ENCODE measurements at regions of chr6 and their contacts with region 1.

Region 1: GRCh38 chr6:42367353-42368011 is 84.2 kb downstream of the TRERF1 start:
- DNase-seq: no peak
- H3K4me3 Mint-ChIP-seq: peak overlapping the region; percentile 47
- H3K27ac Mint-ChIP-seq: peak overlapping the region; percentile 84
- H3K4me1 Mint-ChIP-seq: peaks cover 61% of the 10 kb centered on the region
- H3K27me3 Mint-ChIP-seq: no peaks in the 10 kb centered on the region

Region 2: DNA sequence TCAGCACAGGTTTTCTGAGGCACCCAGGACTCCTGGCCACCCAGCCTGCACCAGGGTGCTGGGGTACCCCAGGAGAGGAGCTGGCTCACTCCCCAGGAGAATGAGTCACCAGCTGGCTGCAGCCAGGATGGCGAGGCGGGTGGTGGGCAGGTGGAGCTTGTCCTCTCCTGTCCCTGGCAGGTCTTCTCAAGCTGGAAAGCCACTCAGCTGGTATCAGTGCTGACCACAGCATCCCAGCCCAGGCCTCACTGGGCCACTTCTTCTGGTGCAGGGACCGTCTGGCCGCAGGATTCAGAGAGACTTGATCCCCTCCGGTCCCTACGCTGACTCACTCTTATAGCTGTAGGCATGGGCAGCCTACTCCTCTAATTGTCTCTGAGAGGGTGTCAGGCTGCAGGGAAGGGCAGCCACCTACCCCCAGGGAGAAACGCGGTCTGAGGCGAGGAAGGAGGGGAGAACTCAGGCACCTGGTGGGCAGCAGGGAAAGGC is 654.3 kb before region 1 on chr6:
- intact Hi-C with region 1: no loop called
- DNase-seq: no peak
- H3K4me3 Mint-ChIP-seq: no peak overlapping the region
- H3K27ac Mint-ChIP-seq: no peak overlapping the region
- H3K4me1 Mint-ChIP-seq: peaks cover 14% of the 10 kb centered on the region
- H3K27me3 Mint-ChIP-seq: no peaks in the 10 kb centered on the region

Region 3: DNA sequence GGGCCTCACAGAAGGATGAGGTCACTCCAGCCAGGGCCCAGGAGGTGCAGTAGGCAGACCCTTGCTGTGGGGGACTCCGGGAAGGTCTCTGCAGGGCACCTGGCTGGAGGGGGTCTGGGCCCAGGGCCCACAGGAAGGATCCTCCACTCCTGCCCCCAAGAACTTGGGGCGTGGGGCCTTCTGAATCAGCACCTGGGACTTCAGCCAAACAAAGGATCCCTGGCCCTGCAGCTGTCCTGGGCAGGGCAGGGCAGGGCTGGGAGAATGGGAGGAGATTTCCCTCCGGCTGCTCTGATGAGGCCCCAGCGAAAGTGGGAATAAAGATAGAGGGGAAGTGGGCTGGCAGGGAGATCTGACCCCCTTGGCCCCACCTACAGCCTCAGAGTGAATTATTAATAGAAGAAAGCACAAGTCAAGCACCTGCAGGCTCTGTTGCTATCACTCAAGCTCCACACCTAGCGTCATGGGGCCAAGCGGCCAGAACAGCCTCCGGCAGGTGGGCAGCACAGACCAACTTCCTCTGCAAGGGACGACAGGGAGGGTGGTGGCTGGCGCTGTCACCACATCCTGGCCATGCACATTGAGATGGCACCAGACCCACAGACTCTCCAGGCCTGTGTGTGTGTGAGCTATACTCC is 88.2 kb before region 1 on chr6:
- intact Hi-C with region 1: no loop called
- DNase-seq: no peak
- H3K4me3 Mint-ChIP-seq: no peak overlapping the region
- H3K27ac Mint-ChIP-seq: peak overlapping the region; percentile 3
- H3K4me1 Mint-ChIP-seq: peaks cover 29% of the 10 kb centered on the region
- H3K27me3 Mint-ChIP-seq: no peaks in the 10 kb centered on the region

Region 4: GRCh38 chr6:42315991-42316378 is 51.5 kb before region 1 on chr6:
- intact Hi-C with region 1: loop called (anchors 1 kb)
- DNase-seq: no peak
- H3K4me3 Mint-ChIP-seq: no peak overlapping the region
- H3K27ac Mint-ChIP-seq: peak overlapping the region; percentile 90
- H3K4me1 Mint-ChIP-seq: peaks cover 43% of the 10 kb centered on the region
- H3K27me3 Mint-ChIP-seq: no peaks in the 10 kb centered on the region

Region 5: DNA sequence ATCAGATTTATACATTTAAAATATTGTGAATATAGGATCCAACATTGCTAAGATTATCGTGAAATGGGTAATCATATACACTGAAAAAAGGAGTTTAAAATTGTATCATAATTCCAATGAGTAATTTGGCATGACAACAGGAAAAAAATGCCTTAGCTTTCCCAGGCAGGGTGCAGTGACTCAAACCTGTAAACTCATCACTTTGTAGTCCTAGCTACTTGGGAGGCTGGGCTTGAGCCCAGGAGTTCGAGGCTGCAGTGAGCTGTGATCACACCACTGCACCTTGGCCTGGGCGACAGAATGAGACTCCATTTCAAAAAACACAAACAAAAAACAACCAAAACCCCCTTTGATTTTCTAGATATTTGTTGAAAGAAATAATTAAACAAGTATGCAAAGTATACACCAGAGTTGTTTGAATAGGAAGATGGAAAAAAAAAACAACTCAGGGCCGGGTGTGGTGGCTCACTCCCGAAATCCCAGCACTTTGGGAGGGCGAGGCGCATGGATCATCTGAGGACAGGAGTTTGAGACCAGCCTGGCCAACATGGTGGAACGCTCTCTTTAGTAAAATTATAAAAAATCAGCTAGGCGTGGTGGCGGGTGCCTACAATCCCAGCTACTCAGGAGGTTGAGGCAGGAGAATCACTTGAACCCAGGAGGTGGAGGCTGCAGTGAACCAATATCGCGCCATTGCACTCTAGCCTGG is 14.5 kb before region 1 on chr6:
- intact Hi-C with region 1: loop called (anchors 1 kb)
- DNase-seq: no peak
- H3K4me3 Mint-ChIP-seq: no peak overlapping the region
- H3K27ac Mint-ChIP-seq: no peak overlapping the region
- H3K4me1 Mint-ChIP-seq: peaks cover 14% of the 10 kb centered on the region
- H3K27me3 Mint-ChIP-seq: no peaks in the 10 kb centered on the region

Region 6: DNA sequence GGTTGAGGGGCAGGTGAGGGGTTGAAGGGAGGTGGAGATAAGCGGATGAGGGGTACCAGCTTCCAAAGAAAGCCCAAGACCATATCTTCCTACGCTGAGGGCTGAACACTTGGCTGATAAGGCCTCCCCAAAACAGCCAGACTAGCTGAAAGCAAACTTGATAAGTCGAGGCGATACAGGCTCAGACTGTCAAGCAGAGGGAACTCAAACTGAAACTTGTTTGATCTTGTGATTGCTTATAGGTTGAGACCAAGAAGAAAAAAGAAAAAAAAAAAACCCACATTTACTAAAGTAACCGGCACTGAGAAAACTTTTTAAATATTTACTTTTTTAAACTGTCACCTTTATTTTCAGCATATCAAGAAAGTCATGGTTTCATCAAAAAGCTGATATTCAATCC is 10.6 kb after region 1 on chr6:
- intact Hi-C with region 1: loop called (anchors 1 kb)
- DNase-seq: peak; percentile 44
- H3K4me3 Mint-ChIP-seq: peak overlapping the region; percentile 45
- H3K27ac Mint-ChIP-seq: peak overlapping the region; percentile 86
- H3K4me1 Mint-ChIP-seq: peaks cover 59% of the 10 kb centered on the region
- H3K27me3 Mint-ChIP-seq: no peaks in the 10 kb centered on the region

Measured in activated T-helper 2 cell treated with anti-CD3 and anti-CD28 coated beads, Interferon-gamma antibody, Interleukin-2, Interleukin-4, amounts not matched to agents 10 μg/mL and 5 μg/mL and 100 μg/mL, durations not matched to agents 14 hours and 24 hours and 36 hours (primary cell).